Naive thymus-derived CD8-positive, alpha-beta T cell (primary cell): ENCODE measurements at regions of chr6 and their contacts with region 1.

Region 1: DNA sequence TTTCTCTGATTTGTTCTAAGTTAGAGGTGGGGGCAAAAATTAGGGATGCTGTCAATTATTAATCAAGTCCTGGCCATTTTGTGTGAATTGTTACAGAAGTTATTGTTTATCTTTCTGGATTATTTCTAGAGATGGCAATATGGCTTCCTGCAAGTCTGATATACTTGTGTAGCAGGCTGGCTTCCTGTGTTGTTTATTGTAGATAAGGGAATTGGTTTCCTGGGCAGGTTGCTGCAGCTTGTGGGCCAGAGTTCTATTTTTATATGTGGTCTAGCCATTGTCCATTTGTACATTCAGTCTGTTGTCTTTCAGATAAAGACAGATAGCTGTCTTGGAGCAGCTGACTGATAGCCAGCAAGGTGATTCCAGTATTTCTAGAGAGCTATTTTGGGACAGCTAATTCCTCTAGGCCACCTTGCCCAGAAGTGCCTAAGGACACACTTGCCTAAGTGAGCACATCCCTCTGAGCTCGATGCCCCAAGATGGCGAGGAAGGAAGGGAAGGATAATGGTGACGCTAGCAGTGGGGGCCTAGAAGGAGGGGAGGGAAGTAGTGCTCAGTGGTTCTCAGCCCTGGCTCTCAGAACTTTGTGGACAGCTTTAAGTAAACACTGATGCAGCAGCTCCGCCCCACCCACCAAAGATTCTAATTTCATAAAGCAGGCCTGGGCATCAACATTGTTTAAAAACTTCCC is 25.5 kb downstream of the DDO start:
- DNase-seq: peak in 3 of 10 donors; percentile 3 to 12 (median 6)
- ATAC-seq: peak; percentile 52 to 54
- H3K4me3 Mint-ChIP-seq: peak overlapping the region in 9 of 10 donors; percentile 32 to 80 (median 67)
- H3K27ac Mint-ChIP-seq: peak overlapping the region; percentile 76 to 97 (median 90)
- H3K4me1 Mint-ChIP-seq: peaks cover 25 to 44% (median 35%) of the 10 kb centered on the region in 4 donors
- H3K27me3 Mint-ChIP-seq: no peaks in the 10 kb centered on the region

Region 2: GRCh38 chr6:110039364-110039980 is 350.4 kb before region 1 on chr6:
- POLR2A ChIA-PET with region 1: interaction called, 16 read pairs
- DNase-seq: peak; percentile 65 to 90 (median 80)
- ATAC-seq: peak; percentile 78 to 84
- H3K4me3 Mint-ChIP-seq: peak overlapping the region; percentile 89 to 97 (median 92)
- H3K27ac Mint-ChIP-seq: peak overlapping the region; percentile 86 to 98 (median 94)
- H3K4me1 Mint-ChIP-seq: peaks cover 12 to 35% (median 19%) of the 10 kb centered on the region in 4 donors
- H3K27me3 Mint-ChIP-seq: no peaks in the 10 kb centered on the region

Region 3: DNA sequence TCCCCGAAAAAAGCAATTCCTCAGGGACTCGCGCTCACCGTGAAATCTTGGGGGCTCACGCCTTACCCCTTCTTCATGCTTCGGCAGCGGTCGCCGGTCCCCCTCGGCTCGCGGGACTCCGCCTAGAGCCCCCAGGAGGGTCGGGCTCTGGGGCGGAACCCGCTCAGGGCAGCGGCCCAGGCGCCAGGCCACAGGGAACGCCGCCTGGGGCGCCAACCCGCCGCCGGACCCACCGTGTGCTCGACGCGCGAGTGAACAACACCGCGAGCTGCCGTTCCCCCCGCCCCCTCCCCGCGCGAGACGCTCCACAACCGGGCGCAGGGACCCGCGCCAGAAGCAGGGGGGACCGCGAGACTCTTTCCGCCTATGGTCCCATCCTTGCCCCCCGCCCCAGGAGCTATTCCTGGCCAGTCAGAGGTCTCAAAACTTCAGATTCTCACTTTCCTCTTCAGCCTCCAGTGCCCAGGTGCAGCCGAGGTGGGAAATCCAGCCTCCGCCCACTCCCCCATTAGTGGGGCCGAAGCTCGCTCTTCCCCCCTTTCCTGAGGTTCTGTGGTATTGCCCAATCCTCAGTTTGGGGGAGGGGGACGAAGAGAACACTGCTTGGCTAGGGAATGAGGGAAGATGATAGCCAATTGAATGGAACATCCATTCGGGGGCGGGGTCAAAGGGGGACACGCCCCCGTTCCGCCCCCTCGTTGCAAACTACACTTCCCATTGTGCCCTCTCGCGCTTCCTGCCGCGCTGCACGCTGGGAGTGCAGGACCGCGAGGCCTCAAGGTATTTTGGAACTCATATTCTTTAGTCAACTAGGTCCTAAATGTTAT is 210.2 kb before region 1 on chr6 and contains the start of gene WASF1:
- POLR2A ChIA-PET with region 1: interaction called, 23 read pairs
- DNase-seq: peak; percentile 85 to 94 (median 89)
- ATAC-seq: peak; percentile 79 to 80
- H3K4me3 Mint-ChIP-seq: peak within 1 kb of the TSS in 9 of 10 donors; percentile 79 to 95 (median 84)
- H3K27ac Mint-ChIP-seq: peak within 1 kb of the TSS; percentile 31 to 92 (median 84)
- H3K4me1 Mint-ChIP-seq: peaks cover 5 to 7% (median 6%) of the 10 kb centered on the region in 4 donors
- H3K27me3 Mint-ChIP-seq: peaks cover 3 to 10% (median 7%) of the 10 kb centered on the region in 5 donors
- polyA plus RNA-seq, gene WASF1: 0.22 to 1.5 (median 1.1) TPM

Region 4: GRCh38 chr6:110366256-110366655 is 23.6 kb before region 1 on chr6:
- POLR2A ChIA-PET with region 1: interaction called, 38 read pairs
- DNase-seq: peak in 6 of 10 donors; percentile 13 to 66 (median 36)
- ATAC-seq: peak; percentile 50 to 65
- H3K4me3 Mint-ChIP-seq: peak overlapping the region; percentile 17 to 89 (median 70)
- H3K27ac Mint-ChIP-seq: peak overlapping the region; percentile 74 to 94 (median 86)
- H3K4me1 Mint-ChIP-seq: peaks cover 30 to 60% (median 44%) of the 10 kb centered on the region in 4 donors
- H3K27me3 Mint-ChIP-seq: peaks cover 0 to 3% (median 0%) of the 10 kb centered on the region in 5 donors

Region 5: GRCh38 chr6:110595112-110595511 is 205.3 kb after region 1 on chr6:
- POLR2A ChIA-PET with region 1: no interaction called
- DNase-seq: no peak
- ATAC-seq: no peak
- H3K4me3 Mint-ChIP-seq: no peak overlapping the region
- H3K27ac Mint-ChIP-seq: no peak overlapping the region
- H3K4me1 Mint-ChIP-seq: peaks cover 0 to 4% (median 0%) of the 10 kb centered on the region in 4 donors
- H3K27me3 Mint-ChIP-seq: no peaks in the 10 kb centered on the region